ENCODE measurements at regions of chr2 and their contacts with region 1.

Region 1: DNA sequence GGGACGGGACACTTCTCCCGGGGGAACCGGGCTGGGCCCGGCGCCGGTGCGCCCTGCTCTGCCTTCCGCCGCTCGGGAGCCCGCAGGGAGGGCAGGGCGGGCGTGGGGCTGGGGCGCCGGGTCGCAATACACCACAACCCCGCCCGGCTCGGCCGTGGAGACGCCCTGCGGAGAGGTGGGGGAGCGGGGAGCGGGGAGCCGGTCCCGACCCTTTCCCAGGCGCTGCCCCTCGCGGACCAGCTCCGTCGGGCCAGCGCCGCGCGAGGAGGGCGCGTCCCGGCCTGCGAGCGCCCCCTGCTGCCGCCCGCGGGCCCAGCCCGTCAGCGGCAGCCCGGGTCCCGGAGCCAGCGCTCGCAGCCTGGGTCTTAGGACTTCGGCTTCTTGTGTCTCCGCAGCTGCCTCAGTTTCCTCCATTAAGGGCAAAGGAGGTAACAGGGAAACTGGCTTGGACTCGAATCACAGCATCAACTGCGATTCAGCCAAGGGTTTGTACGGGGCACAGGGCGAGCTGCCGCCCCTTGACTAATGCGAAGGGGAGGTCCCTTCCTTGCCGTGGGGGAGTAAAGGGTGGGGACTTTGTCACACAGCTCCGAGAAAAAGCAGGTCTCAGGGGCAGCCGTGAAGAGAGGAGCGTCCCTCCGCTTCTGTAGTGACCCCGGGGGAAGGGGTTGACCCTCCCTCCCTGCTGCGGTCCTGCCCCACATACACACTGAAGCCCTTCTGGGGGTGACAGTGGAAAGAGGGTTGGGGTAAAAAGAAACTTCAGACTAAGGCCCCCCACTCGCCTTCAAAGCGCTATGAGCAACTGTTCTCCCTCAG is 717 bp upstream of the ADRA2B start:
- DNase-seq: no peak
- ATAC-seq: peak; percentile 89
- H3K4me3 ChIP-seq: peak overlapping the region; percentile 33 to 44
- H3K27ac ChIP-seq: no peak overlapping the region
- H3K4me1 ChIP-seq: no peaks in the 10 kb centered on the region
- H3K27me3 ChIP-seq: no peaks in the 10 kb centered on the region; the same call in 1 of the 2 replicates
- CTCF ChIP-seq: peak; percentile 98

Region 2: DNA sequence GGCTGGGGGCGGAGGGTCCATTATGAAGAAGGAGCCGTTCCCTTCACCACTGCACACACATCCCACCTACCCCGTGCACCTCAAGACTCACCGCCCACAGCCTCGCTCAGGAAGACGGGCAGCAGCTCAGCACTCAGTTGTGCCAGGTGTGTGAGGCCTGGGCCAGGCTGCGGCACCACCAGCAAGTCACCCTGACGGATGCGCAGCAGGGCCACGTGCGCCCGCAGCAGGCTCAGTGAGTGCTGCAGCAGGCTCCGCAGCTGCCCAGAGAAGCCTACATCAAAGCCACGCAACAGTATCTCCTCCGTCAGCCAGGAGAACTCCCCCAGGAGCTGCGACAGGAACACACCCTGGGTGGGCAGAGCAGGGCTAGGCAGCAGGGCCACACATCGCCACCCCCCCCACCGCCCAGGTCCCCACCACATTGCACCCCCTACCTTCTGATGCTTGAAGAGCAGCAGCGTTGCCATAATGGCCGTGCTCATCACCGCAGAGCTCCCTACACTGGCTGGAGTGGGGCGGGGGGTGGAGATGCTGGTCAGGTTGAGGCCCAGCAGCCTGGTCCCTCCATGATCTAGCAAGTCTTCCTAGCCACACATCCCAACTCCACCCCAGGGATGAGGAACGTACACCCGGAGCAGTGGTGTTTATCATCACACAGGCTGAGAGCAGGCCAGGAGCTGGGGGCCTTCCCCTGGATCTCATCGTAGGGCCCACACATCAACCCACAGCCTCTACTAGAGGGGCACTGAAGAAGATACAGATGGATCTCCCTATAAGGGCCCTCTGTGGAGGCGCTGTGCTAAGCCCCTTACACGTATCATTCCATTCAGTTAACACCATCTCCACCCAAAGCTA is 92.5 kb before region 1 on chr2:
- CTCF ChIA-PET with region 1: interaction called, 11 read pairs
- POLR2A ChIA-PET with region 1: no interaction called
- in situ Hi-C with region 1: no loop called
- intact Hi-C with region 1: no loop called
- DNase-seq: no peak
- ATAC-seq: no peak
- H3K4me3 ChIP-seq: no peak overlapping the region
- H3K27ac ChIP-seq: no peak overlapping the region
- H3K4me1 ChIP-seq: no peaks in the 10 kb centered on the region
- H3K27me3 ChIP-seq: no peaks in the 10 kb centered on the region
- CTCF ChIP-seq: no peak

Measured in Panc1 (cell line).